Caco-2 (cell line): ENCODE measurements at regions of chr12 and their contacts with region 1.

Region 1: GRCh38 chr12:13864081-13864673 is 117.2 kb downstream of the GRIN2B start:
- DNase-seq: peak; percentile 84 to 87
- H3K4me3 ChIP-seq: no peak overlapping the region
- H3K4me3 Mint-ChIP-seq: no peak overlapping the region
- H3K27ac Mint-ChIP-seq: no peak overlapping the region
- H3K4me1 ChIP-seq: peaks cover 23% of the 10 kb centered on the region
- H3K4me1 Mint-ChIP-seq: peaks cover 35% of the 10 kb centered on the region
- H3K27me3 ChIP-seq: no peaks in the 10 kb centered on the region
- H3K27me3 Mint-ChIP-seq: no peaks in the 10 kb centered on the region
- CTCF ChIP-seq: peak; percentile 98 to 99

Region 2: GRCh38 chr12:13609894-13610679 is 254.1 kb before region 1 on chr12:
- CTCF ChIA-PET with region 1: no interaction called
- POLR2A ChIA-PET with region 1: no interaction called
- intact Hi-C with region 1: no loop called
- DNase-seq: peak in 1 of 2 experiments; percentile 37
- H3K4me3 ChIP-seq: no peak overlapping the region
- H3K4me3 Mint-ChIP-seq: no peak overlapping the region
- H3K27ac Mint-ChIP-seq: no peak overlapping the region
- H3K4me1 ChIP-seq: no peaks in the 10 kb centered on the region
- H3K4me1 Mint-ChIP-seq: no peaks in the 10 kb centered on the region
- H3K27me3 ChIP-seq: no peaks in the 10 kb centered on the region
- H3K27me3 Mint-ChIP-seq: no peaks in the 10 kb centered on the region
- CTCF ChIP-seq: no peak

Region 3: DNA sequence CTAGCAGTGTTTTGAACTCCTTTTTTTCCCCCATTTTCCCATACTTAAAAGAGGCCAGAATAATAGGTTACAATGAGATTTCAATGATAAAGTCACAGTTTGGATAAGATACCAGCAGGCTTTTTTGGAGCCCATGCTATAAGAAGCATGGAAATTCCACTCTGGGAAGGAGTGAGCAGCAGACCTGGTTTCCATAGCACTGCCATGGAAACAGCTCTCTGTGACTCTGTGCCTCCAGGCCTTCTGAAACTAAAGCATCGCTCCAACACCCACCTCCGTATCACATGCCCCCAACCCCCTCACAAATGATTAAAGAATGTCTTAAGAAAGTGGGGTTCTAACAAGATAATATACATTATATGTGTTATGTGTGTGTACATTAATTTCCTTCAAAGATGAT is 47.8 kb before region 1 on chr12:
- CTCF ChIA-PET with region 1: no interaction called
- POLR2A ChIA-PET with region 1: no interaction called
- intact Hi-C with region 1: no loop called
- DNase-seq: no peak
- H3K4me3 ChIP-seq: no peak overlapping the region
- H3K4me3 Mint-ChIP-seq: no peak overlapping the region
- H3K27ac Mint-ChIP-seq: no peak overlapping the region
- H3K4me1 ChIP-seq: no peaks in the 10 kb centered on the region; the same call in 1 of the 2 replicates
- H3K4me1 Mint-ChIP-seq: peaks cover 5% of the 10 kb centered on the region
- H3K27me3 ChIP-seq: no peaks in the 10 kb centered on the region
- H3K27me3 Mint-ChIP-seq: no peaks in the 10 kb centered on the region
- CTCF ChIP-seq: no peak

Region 4: DNA sequence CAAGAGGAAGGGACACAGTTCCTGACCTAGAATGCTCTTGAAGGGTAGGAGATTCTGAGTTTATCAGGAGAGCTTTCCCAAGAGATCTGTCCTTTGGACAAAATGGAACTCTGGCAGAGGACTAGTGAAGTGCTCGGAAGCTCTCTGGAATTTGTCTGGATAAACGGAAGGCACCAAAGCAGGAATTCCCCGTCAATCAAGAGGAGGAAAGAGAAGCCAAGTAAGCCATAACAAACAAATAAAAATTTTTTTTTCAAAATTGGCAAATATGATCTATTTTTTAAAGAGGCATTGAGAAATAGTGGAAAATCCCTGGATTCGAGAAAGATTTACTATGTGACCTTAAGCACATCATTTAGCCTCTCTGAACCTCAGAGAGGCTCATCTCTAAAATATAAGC is 18.0 kb after region 1 on chr12:
- CTCF ChIA-PET with region 1: interaction called, 8 read pairs
- POLR2A ChIA-PET with region 1: no interaction called
- intact Hi-C with region 1: loop called (anchors 1 kb)
- DNase-seq: no peak
- H3K4me3 ChIP-seq: no peak overlapping the region
- H3K4me3 Mint-ChIP-seq: no peak overlapping the region
- H3K27ac Mint-ChIP-seq: no peak overlapping the region
- H3K4me1 ChIP-seq: peaks cover 7% of the 10 kb centered on the region
- H3K4me1 Mint-ChIP-seq: peaks cover 25% of the 10 kb centered on the region
- H3K27me3 ChIP-seq: no peaks in the 10 kb centered on the region
- H3K27me3 Mint-ChIP-seq: no peaks in the 10 kb centered on the region
- CTCF ChIP-seq: no peak

Region 5: DNA sequence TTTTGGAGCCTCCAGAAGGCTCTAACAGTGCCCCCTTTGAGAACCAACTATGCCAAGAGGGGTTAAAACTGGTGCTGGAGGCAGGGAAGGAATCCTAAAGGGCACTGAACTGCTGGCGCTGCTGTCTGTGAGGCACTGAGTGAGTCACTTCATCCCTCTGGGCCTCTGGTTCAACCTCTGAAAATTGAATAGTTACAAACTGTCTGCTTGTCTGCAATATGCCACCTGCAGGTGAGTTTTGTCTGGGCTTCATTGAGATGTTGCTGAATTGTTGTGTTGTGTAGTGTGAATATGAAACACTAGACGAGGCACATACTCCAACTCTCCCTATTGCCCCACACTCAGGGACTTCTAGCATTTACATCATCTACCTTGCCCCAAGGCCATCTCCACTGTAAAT is 49.2 kb after region 1 on chr12:
- CTCF ChIA-PET with region 1: interaction called, 6 read pairs
- POLR2A ChIA-PET with region 1: no interaction called
- intact Hi-C with region 1: loop called (anchors 2 kb)
- DNase-seq: no peak
- H3K4me3 ChIP-seq: no peak overlapping the region
- H3K4me3 Mint-ChIP-seq: no peak overlapping the region
- H3K27ac Mint-ChIP-seq: no peak overlapping the region
- H3K4me1 ChIP-seq: peaks cover 20% of the 10 kb centered on the region
- H3K4me1 Mint-ChIP-seq: peaks cover 42% of the 10 kb centered on the region
- H3K27me3 ChIP-seq: no peaks in the 10 kb centered on the region
- H3K27me3 Mint-ChIP-seq: no peaks in the 10 kb centered on the region
- CTCF ChIP-seq: no peak